GM18951 (cell line): ENCODE measurements at regions of chr2 and their contacts with region 1.

Region 1: DNA sequence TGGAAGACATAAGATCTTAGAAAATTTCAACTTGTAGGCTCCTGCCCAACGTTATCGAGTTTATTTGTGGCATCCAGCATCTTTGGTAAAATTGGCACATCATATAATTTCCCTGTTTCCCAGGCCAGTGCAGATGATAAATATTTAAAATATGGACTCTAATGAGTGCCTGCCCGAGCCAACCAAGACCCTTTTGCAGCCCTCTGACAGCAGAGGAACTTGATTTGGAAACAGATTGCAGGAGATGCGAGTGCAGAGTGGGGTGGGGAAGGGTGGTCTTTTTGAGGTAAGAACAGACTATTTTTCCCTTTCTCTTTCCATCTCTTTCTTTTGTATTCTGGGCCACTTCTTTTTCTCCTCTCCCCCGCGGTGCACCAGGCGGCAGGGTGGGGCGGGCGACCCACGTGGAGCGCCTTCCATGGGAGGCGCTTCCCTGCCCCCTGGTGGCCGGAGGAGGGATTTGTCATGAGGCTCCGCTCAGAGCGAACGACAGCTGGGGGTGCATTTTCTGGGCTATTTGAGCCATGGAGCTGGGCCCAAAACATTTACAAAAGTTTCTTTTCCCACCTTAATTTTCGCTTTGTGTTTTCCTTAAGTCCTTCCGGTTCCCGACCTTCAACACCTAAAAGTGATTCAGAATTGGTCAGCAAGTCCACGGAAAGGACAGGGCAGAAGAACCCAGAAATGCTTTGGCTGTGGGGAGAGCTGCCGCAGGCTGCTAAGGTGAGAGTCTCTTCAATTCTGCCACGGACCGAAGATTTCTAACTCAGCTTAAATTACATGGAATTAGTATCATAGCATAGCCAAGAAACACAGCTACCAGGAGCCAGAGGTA is 32.7 kb downstream of the LPIN1 start:
- POLR2A ChIP-seq: no peak

Region 2: GRCh38 chr2:11477994-11478393 is 301.1 kb before region 1 on chr2:
- in situ Hi-C with region 1: loop called (anchors 25 kb)
- POLR2A ChIP-seq: no peak

Region 3: DNA sequence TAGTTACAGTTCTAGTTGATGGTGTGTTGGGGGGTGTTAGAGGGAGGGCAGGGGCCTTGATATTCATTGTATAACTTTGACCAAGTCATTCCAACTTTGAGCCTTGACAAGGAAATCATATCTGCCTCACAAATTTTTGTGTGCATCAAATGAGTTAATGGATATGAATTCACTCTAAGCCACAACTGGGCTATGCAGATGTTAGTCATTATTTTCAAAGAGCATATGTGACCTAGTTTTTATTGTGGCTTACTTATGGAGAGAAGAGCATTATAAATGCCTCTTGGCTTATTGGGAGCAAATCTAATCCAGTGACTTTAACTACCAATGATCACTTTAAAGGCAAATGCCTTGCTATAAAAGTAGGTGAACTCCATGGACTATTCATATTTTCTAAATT is 217.5 kb after region 1 on chr2:
- in situ Hi-C with region 1: no loop called
- POLR2A ChIP-seq: no peak

Region 4: DNA sequence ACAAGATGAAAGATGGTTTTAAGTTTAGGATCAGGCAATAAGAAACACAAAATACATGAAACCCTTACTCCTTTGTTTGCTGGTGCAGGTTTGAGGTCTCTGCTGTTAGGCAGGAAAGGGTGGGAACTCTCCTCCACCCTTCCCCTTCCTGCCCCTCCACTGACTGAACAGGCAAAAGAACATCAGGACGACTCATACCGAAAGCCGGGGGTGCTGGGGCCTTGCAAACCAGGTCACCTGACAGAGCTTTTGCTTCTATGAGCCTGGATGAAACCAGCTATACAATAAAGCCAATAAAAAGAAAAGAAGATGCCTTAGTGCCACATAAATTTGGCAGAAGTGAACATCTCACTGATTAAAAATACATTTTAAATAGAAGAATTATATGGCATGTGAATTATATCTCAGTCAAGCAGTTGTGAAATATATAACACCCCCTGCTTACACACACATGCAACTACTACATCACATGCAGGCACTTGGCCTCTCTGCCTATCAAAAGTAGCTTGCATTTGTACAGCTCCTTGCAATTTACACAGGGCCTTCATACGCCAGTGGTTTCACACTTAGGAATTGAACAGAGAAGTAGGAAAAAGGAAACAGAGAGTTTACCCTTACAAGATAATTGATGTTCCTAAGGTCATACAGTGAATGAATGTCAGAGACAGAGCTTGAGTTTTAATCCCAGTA is 722.5 kb after region 1 on chr2:
- in situ Hi-C with region 1: no loop called
- POLR2A ChIP-seq: no peak